PC-3 (cell line): ENCODE measurements at regions of chr10 and their contacts with region 1.

Region 1: DNA sequence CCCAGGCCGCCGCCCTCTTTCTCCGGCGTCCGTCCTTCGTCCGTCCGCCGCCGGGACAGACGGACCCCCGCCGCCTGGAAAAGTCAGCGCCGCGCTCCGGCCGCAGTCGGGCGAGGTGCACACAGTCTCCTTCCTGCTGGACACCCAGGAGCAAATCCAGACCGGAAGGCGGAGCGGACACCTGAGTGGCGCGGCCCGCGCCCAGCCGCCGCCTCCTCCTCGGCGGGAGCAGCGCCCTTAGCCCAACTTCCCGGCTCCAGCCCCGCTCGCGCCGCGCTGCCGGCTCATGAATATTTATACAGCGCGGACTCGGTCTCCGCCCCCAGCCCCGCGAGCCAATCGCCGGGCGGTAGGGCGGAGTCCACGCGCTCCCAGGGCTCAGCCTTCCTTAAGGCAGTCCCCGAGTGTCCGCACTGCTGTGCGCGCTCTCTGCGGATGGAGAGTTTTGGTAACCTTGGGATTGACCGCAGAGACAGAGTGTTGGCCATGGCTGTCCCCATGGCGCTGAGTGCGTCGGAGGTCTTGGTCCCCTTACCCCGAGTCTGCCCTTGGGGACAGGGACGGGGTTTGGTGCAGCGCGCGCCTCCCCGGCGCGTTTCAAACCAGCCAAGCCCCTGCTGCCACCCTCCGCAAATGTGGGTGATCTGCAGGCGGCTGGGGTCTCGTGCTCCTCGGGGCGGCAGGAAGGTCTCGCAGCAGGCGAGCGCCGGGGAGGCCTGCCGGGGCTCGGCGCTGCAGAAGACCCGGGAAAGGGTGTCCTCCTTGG is at the start of gene FZD8:
- DNase-seq: peak; percentile 100
- ATAC-seq: peak; percentile 73
- H3K4me3 ChIP-seq: peak within 1 kb of the TSS; percentile 80
- H3K27ac ChIP-seq: peak within 1 kb of the TSS; percentile 62
- H3K4me1 ChIP-seq: peaks cover 30% of the 10 kb centered on the region
- H3K27me3 ChIP-seq: no peaks in the 10 kb centered on the region
- CTCF ChIP-seq: peak; percentile 60; the same call in 1 of the 2 replicates
- total RNA-seq, gene FZD8: 275 and 375 TPM in 2 replicates

Region 2: GRCh38 chr10:35613597-35614226 is 28.5 kb before region 1 on chr10:
- CTCF ChIA-PET with region 1: interaction called, 19 read pairs
- POLR2A ChIA-PET with region 1: no interaction called
- intact Hi-C with region 1: no loop called
- DNase-seq: peak; percentile 92
- ATAC-seq: peak; percentile 96
- H3K4me3 ChIP-seq: no peak overlapping the region
- H3K27ac ChIP-seq: no peak overlapping the region
- H3K4me1 ChIP-seq: peaks cover 8% of the 10 kb centered on the region
- H3K27me3 ChIP-seq: no peaks in the 10 kb centered on the region
- CTCF ChIP-seq: peak; percentile 100

Region 3: DNA sequence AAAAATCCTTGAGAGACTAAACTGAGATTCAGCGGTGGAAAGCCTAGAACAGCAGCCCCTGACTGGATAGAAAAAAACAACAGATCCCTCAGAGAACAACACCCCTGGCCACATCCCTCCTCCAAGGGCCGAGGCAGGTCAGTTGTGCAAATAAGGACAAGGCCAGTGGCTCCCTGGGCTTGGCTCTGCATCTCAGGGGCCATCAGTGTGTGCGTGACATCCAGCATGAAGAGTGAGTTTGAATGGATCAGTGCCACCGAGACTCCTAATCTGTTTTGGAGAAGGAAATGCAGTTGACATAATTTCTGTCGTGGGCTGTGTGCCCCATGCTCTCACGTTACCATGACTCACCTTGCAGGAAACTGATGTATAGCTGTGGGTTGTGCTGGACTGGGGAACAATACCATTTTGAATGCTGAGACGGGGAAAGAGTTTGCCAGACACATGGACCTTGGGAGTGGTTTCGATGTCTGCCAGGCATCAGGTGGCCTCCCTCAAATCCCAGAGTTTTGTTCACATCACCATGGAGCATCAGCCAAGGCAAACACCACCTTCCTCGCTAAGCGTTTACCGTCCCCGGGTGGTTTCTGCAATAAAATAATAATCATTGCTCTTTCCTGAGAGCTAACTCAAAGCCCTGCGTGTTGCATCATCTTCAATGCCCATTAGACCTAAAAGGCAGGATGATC is 153.1 kb after region 1 on chr10:
- CTCF ChIA-PET with region 1: no interaction called
- POLR2A ChIA-PET with region 1: no interaction called
- intact Hi-C with region 1: loop called (anchors 1 kb)
- DNase-seq: peak; percentile 100
- ATAC-seq: peak; percentile 94
- H3K4me3 ChIP-seq: peak overlapping the region; percentile 12
- H3K27ac ChIP-seq: peak overlapping the region; percentile 80
- H3K4me1 ChIP-seq: peaks cover 46% of the 10 kb centered on the region
- H3K27me3 ChIP-seq: no peaks in the 10 kb centered on the region
- CTCF ChIP-seq: no peak

Region 4: DNA sequence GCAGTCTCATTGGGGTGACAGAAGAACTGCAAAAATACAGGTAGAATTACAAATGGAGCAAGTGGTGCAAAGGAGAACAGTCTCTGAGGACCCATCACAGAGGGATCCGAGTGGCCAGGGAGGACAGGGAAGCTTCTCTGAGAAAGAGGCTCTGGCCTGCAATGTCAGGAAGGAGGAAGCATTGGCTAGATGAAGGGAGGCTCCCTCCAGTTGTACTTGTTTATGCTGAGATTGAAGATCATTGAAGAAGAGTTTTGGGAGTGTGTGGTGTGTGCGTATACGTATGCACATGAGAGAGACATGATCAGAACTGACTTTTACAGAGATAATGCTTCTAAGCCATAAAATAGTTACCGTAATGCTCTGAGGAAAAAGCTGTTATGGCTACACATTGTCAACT is 274.6 kb after region 1 on chr10:
- CTCF ChIA-PET with region 1: no interaction called
- POLR2A ChIA-PET with region 1: no interaction called
- intact Hi-C with region 1: loop called (anchors 1 kb)
- DNase-seq: peak; percentile 64
- ATAC-seq: peak; percentile 21
- H3K4me3 ChIP-seq: no peak overlapping the region
- H3K27ac ChIP-seq: no peak overlapping the region
- H3K4me1 ChIP-seq: peaks cover 22% of the 10 kb centered on the region
- H3K27me3 ChIP-seq: no peaks in the 10 kb centered on the region
- CTCF ChIP-seq: peak; percentile 68

Region 5: DNA sequence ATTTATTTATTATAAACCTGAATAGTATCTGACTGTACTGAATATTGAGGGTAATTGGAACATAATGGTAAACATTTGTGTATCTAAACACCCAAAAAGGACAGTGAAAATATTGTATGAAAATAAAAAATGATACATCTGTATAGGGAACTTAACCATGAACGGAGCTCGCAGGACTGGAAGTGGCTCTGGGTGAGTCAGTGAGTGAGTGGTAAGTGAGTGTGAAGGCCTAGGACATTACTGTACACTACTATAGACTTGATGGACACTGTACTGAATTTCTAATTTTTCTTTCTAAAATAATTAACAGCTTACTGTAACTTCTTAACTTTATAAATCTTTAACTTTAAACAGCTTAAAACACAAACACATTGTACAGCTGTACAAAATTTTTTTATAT is 454.4 kb after region 1 on chr10:
- CTCF ChIA-PET with region 1: no interaction called
- POLR2A ChIA-PET with region 1: interaction called, 9 read pairs
- intact Hi-C with region 1: loop called (anchors 1 kb)
- DNase-seq: peak; percentile 97
- ATAC-seq: peak; percentile 71
- H3K4me3 ChIP-seq: no peak overlapping the region
- H3K27ac ChIP-seq: peak overlapping the region; percentile 58
- H3K4me1 ChIP-seq: peaks cover 29% of the 10 kb centered on the region
- H3K27me3 ChIP-seq: no peaks in the 10 kb centered on the region
- CTCF ChIP-seq: no peak

Region 6: GRCh38 chr10:36880898-36881297 is 1238.7 kb after region 1 on chr10:
- CTCF ChIA-PET with region 1: interaction called, 12 read pairs
- POLR2A ChIA-PET with region 1: interaction called, 3 read pairs
- intact Hi-C with region 1: no loop called
- DNase-seq: peak; percentile 93
- ATAC-seq: peak; percentile 86
- H3K4me3 ChIP-seq: no peak overlapping the region
- H3K27ac ChIP-seq: no peak overlapping the region
- H3K4me1 ChIP-seq: no peaks in the 10 kb centered on the region
- H3K27me3 ChIP-seq: 0 out of 2 replicates have a peak, but pooled peaks cover 3% of the 10 kb centered on the region
- CTCF ChIP-seq: peak; percentile 86